Heart right ventricle (tissue), 16 donors: ENCODE measurements at regions of chr15 and their contacts with region 1.

Region 1: GRCh38 chr15:71114896-71115554 is at the start of gene THSD4:
- DNase-seq: peak; percentile 66 to 79
- ATAC-seq: peak; percentile 58 to 78 (median 70)
- H3K4me3 ChIP-seq: peak within 1 kb of the TSS; percentile 58 to 79 (median 66)
- H3K27ac ChIP-seq: peak within 1 kb of the TSS; percentile 73 to 96 (median 88)
- H3K4me1 ChIP-seq: peaks cover 0 to 37% (median 9%) of the 10 kb centered on the region in 9 donors
- H3K27me3 ChIP-seq: peaks cover 0 to 38% (median 0%) of the 10 kb centered on the region in 7 donors
- CTCF ChIP-seq: peak; percentile 86 to 98 (median 96)
- total RNA-seq, gene THSD4: 72.3 to 212 (median 170) TPM

Region 2: GRCh38 chr15:70892002-70892914 is 222.8 kb before region 1 on chr15 and contains the starts of genes LRRC49 and THAP10:
- intact Hi-C with region 1: loop called in 1 of 10 experiments (anchors 5 kb)
- DNase-seq: peak; percentile 80 to 92
- ATAC-seq: peak; percentile 94 to 99 (median 98)
- H3K4me3 ChIP-seq: peak within 1 kb of the TSS; percentile 64 to 92 (median 68)
- H3K27ac ChIP-seq: peak within 1 kb of the TSS; percentile 41 to 86 (median 72)
- H3K4me1 ChIP-seq: peaks cover 0 to 26% (median 13%) of the 10 kb centered on the region in 9 donors
- H3K27me3 ChIP-seq: no peaks in the 10 kb centered on the region
- CTCF ChIP-seq: no peak
- total RNA-seq, gene LRRC49: 28.4 to 149 (median 78.9) TPM
- total RNA-seq, gene THAP10: 3.0 to 7.0 (median 5.0) TPM

Region 3: DNA sequence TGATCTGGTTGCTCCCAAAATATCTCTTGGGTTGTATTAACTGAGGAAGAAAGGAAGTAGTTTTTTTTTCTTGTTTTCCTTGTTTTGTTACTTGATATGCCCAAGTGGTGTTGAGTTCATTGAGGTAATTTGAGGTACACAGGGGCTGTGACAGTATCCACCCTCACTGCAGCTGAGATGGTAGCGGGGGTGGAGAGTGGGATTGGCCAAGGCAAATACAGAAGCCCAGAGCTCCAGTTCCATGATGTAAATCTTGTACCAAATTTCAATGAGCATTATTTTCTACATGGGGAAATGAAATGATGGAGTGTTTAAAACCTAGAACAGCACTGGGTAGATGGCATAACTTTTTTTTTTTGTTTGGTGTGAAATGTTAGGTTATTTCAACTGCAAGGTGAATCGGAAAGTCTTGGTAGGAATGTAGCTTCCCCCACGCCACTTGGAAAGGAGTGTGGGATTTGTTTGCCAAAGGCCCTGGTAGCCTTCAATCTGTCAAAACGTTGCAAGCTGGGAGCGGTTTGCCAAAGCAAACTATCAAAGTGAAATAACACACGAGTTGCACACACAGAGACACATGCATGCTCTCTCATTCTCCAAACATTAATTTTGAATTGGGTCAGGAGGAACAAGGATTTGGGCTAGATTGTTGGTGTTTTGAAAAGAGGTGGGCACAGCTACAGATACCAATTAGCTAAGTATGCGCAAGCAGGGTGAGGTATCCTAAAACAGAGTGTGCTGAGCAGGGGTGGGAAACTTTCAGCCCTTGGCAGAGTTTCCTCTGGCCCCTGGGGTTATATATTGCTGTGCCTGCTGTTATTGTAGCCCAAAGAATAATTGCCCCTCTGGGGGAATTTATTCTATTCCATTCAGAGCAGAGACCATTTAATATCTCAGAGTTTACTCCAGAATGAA is 34.9 kb after region 1 on chr15:
- intact Hi-C with region 1: loop called in 1 of 10 experiments (anchors 2 kb)
- DNase-seq: peak in 1 of 2 donors; percentile 74
- ATAC-seq: peak; percentile 46 to 83 (median 70)
- H3K4me3 ChIP-seq: no peak overlapping the region
- H3K27ac ChIP-seq: peak overlapping the region; percentile 44 to 90 (median 78)
- H3K4me1 ChIP-seq: peaks cover 3 to 97% (median 34%) of the 10 kb centered on the region in 9 donors
- H3K27me3 ChIP-seq: no peaks in the 10 kb centered on the region
- CTCF ChIP-seq: no peak

Region 4: DNA sequence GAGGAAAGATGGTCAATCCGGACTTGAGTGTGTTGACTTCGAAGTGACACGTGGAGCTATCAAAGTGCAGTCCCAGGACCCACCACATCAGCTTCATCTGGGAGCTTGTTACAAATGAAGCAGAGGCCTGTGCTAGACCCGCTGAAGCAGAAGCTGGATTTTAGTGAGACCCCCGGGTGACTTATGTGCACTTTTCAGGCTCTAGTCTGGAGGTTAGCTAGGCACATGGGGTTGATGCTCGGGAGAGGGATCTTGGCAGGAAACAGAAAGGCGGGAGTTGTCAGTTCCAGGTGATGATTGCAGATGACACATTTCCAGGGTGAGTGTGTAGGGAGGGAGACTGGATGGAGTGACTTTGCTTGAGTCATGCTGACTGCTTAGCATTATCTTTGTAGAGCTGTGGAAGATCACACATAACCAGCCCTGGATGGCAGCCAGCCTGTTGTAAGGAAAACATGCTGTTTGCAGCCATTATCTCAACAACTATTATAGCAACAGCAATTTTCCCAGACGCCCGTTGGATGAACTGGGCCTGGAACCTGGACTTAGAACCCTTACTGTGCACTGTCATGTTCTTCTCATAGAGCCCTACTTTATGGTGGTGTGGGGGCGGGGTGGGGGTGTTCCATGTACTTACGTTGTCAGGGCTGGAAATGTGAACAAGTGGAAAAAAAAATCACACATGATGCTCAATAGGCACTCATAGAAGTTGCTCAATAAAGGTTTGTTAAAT is 122.6 kb after region 1 on chr15:
- intact Hi-C with region 1: loop called in 2 of 10 experiments (anchors 10 kb)
- DNase-seq: peak; percentile 66 to 78
- ATAC-seq: peak; percentile 76 to 97 (median 92)
- H3K4me3 ChIP-seq: no peak overlapping the region
- H3K27ac ChIP-seq: peak overlapping the region in 9 of 10 donors; percentile 0 to 68 (median 54)
- H3K4me1 ChIP-seq: peaks cover 0 to 49% (median 19%) of the 10 kb centered on the region in 9 donors
- H3K27me3 ChIP-seq: no peaks in the 10 kb centered on the region
- CTCF ChIP-seq: no peak

Region 5: DNA sequence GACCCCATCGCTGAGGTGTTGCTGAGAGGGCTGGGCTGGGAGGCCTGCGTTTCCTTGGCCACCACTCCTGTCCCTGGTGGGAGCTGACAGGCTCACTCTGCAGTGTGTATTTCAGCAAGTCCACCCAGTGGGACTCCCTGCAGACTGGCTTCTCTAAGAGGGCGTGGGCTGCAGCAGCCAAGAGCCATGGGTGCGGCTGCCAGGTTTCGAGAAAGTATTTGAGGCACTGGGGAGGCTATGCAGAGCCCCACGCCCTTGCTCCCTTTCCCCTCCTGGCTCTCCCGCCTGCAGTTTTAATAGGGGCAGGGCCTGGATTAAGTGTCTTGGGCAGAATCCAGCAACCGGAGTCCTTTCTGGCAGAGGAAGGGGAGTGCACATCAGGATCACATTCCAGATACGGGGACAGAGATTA is 242.3 kb after region 1 on chr15:
- intact Hi-C with region 1: loop called in 2 of 10 experiments (anchors 2 to 5 kb)
- DNase-seq: peak; percentile 60 to 61
- ATAC-seq: peak; percentile 68 to 88 (median 81)
- H3K4me3 ChIP-seq: no peak overlapping the region
- H3K27ac ChIP-seq: peak overlapping the region in 8 of 10 donors; percentile 2 to 71 (median 44)
- H3K4me1 ChIP-seq: peaks cover 10 to 43% (median 23%) of the 10 kb centered on the region in 9 donors
- H3K27me3 ChIP-seq: no peaks in the 10 kb centered on the region
- CTCF ChIP-seq: no peak

Region 6: GRCh38 chr15:71800835-71801745 is 686.1 kb after region 1 on chr15:
- intact Hi-C with region 1: loop called in 1 of 10 experiments (anchors 10 kb)
- DNase-seq: peak in 1 of 2 donors; percentile 40
- ATAC-seq: peak; percentile 65 to 90 (median 80)
- H3K4me3 ChIP-seq: no peak overlapping the region
- H3K27ac ChIP-seq: no peak overlapping the region
- H3K4me1 ChIP-seq: peaks cover 0 to 11% (median 5%) of the 10 kb centered on the region in 9 donors
- H3K27me3 ChIP-seq: peaks cover 0 to 4% (median 0%) of the 10 kb centered on the region in 7 donors
- CTCF ChIP-seq: peak; percentile 74 to 92 (median 85)